ENCODE measurements at regions of chr7 and their contacts with region 1.

Region 1: DNA sequence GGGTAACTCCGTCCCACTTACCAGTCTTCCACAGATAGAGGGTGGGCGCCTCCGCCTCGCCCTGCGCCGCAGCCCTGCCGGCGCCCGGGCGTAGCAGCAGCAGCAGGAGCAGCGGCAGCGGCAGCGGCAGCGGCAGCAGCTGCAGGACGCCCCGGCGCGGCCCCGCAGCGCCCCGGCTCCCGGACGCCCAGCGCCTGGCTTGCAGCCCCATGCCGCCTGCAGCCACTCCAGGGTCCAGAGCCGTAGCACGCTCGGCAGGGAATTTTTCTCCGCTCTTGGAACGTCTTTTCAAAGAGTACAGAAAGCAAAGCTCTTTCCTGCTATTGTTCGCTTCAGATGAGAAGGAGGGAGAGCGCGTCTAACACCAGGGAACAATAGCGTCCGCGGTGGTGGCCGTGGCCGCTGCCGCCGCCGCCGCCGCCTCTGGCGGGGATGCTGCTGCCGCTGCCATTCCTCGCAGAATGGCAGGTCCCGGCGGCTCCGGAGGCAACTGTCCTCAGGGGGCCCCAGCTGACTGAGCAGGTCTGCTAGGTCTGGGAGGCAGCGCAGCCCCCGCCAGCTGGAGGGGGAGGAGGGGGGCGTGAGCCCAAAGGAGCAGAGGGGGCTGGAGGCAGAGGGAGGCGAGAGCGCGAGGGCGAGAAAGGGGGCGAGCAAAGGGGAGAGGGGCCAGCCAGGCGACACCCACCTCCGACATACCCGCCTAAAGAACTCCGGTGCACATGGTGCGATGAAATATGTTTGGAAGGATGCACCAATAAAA is at the start of gene THSD7A:
- DNase-seq: peak; percentile 13
- ATAC-seq: peak; percentile 97
- H3K4me3 ChIP-seq: peak within 1 kb of the TSS; percentile 61
- H3K27ac ChIP-seq: no peak within 1 kb of the TSS
- H3K4me1 ChIP-seq: no peaks in the 10 kb centered on the region
- H3K27me3 ChIP-seq: peaks cover 11% of the 10 kb centered on the region
- CTCF ChIP-seq: no peak
- POLR2A ChIP-seq: no peak
- RAD21 ChIP-seq: no peak
- total RNA-seq, gene THSD7A: under 0.01 and 0.18 TPM in 2 replicates

Region 2: GRCh38 chr7:11702938-11703337 is 129.0 kb before region 1 on chr7:
- CTCF ChIA-PET with region 1: no interaction called
- POLR2A ChIA-PET with region 1: no interaction called
- dilution Hi-C with region 1: no loop called
- in situ Hi-C with region 1: no loop called
- intact Hi-C with region 1: no loop called
- DNase-seq: no peak
- ATAC-seq: no peak
- H3K4me3 ChIP-seq: no peak overlapping the region
- H3K27ac ChIP-seq: no peak overlapping the region
- H3K4me1 ChIP-seq: no peaks in the 10 kb centered on the region
- H3K27me3 ChIP-seq: no peaks in the 10 kb centered on the region
- CTCF ChIP-seq: no peak
- POLR2A ChIP-seq: no peak
- RAD21 ChIP-seq: no peak

Region 3: DNA sequence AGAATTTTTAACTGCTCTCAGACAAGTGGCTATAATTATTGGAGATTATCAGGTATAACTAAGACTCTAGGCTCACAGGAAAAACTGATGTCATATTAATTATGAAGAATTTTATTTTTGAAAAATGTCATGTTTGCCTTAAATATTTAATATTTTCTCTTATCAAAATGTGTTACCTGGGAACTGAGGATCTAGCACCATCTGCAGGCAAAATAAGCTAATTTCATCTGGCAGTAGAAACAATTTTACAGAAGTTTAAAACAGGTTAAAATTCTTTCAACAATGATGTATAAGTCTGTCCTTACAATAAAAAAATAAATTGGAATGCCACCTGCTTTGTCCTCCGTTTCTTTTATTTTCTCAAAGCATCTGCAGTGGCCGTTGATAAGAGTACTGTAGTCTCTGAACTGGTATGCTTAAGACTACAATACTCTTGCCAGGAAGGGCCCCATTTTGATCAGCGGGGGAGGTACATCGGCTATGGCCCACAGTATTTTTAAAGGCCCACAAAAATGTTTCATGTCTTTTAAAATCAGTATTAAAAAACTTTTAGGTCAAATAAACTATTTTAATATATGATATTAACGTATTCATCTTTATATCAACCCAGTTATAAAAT is 490.5 kb after region 1 on chr7:
- CTCF ChIA-PET with region 1: no interaction called
- POLR2A ChIA-PET with region 1: no interaction called
- dilution Hi-C with region 1: no loop called
- in situ Hi-C with region 1: loop called (anchors 5 kb)
- intact Hi-C with region 1: loop called (anchors 1 kb)
- DNase-seq: peak; percentile 38
- ATAC-seq: no peak
- H3K4me3 ChIP-seq: no peak overlapping the region
- H3K27ac ChIP-seq: no peak overlapping the region
- H3K4me1 ChIP-seq: no peaks in the 10 kb centered on the region
- H3K27me3 ChIP-seq: no peaks in the 10 kb centered on the region
- CTCF ChIP-seq: peak; percentile 72
- POLR2A ChIP-seq: no peak
- RAD21 ChIP-seq: peak; percentile 70

Region 4: GRCh38 chr7:12403287-12404181 is 571.6 kb after region 1 on chr7 and contains the start of gene VWDE:
- CTCF ChIA-PET with region 1: no interaction called
- POLR2A ChIA-PET with region 1: no interaction called
- dilution Hi-C with region 1: no loop called
- in situ Hi-C with region 1: no loop called
- intact Hi-C with region 1: no loop called
- DNase-seq: no peak
- ATAC-seq: peak; percentile 46
- H3K4me3 ChIP-seq: no peak within 1 kb of the TSS; the same call in 1 of the 2 replicates
- H3K27ac ChIP-seq: no peak within 1 kb of the TSS
- H3K4me1 ChIP-seq: no peaks in the 10 kb centered on the region
- H3K27me3 ChIP-seq: peaks cover 5% of the 10 kb centered on the region; the same call in 1 of the 2 replicates
- CTCF ChIP-seq: no peak
- POLR2A ChIP-seq: no peak
- RAD21 ChIP-seq: no peak
- total RNA-seq, gene VWDE: 0.18 and 0.28 TPM in 2 replicates